ENCODE measurements at regions of chr6 and their contacts with region 1.

Region 1: DNA sequence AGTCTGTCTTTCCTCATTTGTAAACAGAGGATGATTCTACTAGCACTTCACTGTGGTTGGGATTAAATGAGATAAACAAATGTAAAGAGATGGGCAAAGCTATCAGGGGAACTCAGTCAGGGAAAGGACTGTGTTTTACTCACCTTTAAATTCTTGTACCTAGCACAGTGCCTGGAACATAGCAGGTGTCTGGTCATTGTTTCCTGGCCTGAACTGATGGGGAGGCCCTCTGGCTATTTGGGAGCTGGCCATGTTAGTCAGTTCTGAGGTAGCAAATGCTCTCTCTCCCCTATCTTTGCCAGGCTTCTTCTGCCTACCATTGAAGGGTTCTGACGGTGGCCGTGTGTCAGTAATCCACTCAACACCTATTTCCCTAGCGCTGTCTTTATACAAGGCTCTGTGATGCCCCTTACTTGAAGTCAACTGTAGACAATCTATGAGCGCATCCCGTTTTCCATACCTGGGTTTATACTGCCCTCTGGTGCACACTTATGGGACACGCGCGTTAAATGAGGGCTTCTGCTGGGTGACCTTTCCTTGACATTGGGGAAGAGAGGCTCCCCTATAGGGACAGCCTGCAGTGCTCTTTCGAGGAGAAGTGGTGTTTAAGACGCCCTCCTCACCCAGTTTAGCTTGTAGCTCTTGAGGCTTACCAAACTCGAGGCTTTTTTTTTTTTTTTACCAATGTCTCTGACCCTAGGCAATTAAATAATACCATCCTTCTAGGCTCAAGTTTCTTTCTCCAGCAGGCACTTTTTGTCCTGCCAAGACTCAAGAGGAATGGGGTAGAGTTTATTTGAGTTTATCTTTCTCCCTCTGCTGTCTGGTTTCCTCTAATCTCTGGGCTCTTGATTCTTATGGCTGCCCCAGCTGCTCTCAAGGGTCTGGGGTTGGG is 4.0 kb upstream of the SPATS1 start:
- DNase-seq: no peak
- ATAC-seq: peak; percentile 83
- H3K4me3 ChIP-seq: no peak overlapping the region
- H3K27ac ChIP-seq: no peak overlapping the region
- H3K4me1 ChIP-seq: no peaks in the 10 kb centered on the region
- H3K27me3 ChIP-seq: no peaks in the 10 kb centered on the region

Region 2: DNA sequence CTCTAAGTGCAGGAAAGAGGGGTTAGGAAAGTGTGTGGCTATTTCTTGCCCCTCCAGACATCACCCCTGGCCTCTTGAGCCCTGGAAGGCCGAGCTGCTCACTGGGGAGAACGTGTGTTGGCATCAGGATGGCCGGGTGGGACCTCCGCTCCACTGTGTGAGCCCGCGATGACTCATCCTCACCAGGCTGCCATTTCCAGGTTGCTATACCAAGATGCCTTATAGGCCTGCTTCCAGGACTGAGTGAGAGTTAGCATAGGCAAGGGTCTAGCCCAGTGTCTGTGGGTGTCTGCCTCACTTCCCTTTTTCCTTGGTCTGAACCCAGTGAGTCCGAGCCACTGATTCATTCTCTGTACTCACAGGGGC is 316.2 kb before region 1 on chr6:
- intact Hi-C with region 1: no loop called
- DNase-seq: peak in 1 of 2 donors; percentile 68
- ATAC-seq: peak; percentile 21
- H3K4me3 ChIP-seq: no peak overlapping the region
- H3K27ac ChIP-seq: no peak overlapping the region
- H3K4me1 ChIP-seq: no peaks in the 10 kb centered on the region
- H3K27me3 ChIP-seq: no peaks in the 10 kb centered on the region

Region 3: DNA sequence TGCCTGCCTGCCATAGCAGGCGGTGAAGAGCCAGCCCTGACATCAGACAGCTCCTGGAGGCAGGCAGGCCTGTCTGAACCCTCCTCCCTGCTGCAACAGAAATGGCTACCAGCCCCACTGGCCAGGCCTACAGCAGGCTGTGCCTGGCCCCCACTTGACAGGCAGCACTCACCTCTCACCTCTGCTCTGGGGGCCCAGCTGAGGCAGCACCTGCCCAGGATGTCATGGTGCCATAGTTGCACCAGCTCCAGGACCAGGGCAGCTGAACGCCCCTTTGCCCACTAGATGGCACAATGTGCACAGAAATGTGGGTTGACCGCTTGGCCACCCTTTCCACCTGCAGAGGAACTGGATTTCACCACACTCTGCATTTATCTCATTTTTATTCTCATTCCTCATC is 241.9 kb before region 1 on chr6:
- intact Hi-C with region 1: loop called (anchors 5 kb)
- DNase-seq: peak; percentile 78 to 88
- ATAC-seq: peak; percentile 88
- H3K4me3 ChIP-seq: no peak overlapping the region
- H3K27ac ChIP-seq: no peak overlapping the region
- H3K4me1 ChIP-seq: no peaks in the 10 kb centered on the region
- H3K27me3 ChIP-seq: no peaks in the 10 kb centered on the region

Region 4: DNA sequence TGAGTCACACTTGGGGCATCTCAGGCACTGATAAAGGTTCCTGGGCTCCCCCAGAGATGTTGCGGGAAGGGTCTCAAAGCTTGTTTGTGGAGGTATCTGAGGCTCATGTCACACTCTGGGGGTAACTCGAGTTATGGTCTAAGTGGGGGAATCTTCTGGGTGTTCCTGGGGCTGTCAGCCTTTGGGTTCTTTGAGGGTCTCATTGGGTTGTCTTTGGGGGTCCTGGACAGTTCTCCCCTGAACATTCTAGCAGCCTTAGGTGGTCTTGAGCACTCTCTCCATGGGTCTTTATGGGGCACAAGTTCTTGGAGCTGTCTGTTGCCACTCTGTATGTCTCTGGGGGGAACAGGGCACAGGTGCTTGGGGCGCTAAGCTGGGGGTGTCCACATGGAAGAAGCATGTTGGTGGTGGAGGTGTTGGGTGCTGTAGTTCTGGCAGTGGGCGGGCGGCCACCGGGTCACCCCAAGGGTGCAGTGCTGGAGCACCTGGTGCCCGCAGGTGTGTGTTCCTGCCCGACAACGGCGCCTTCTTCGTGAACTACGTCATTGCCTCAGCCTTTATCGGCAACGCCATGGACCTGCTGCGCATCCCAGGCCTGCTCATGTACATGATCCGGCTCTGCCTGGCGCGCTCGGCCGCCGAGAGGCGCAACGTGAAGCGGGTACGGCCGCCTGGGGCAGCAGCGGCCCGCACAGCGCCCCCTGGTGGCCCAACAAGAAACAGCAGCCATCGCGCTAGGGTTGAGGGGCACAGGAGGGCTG is 186.9 kb before region 1 on chr6:
- intact Hi-C with region 1: loop called in 1 of 2 experiments (anchors 10 kb)
- DNase-seq: peak; percentile 82 to 92
- ATAC-seq: peak; percentile 84
- H3K4me3 ChIP-seq: no peak overlapping the region
- H3K27ac ChIP-seq: no peak overlapping the region
- H3K4me1 ChIP-seq: no peaks in the 10 kb centered on the region
- H3K27me3 ChIP-seq: no peaks in the 10 kb centered on the region

Region 5: GRCh38 chr6:44172731-44173500 is 165.6 kb before region 1 on chr6:
- intact Hi-C with region 1: loop called in 1 of 2 experiments (anchors 10 kb)
- DNase-seq: peak; percentile 91 to 95
- ATAC-seq: peak; percentile 92
- H3K4me3 ChIP-seq: no peak overlapping the region
- H3K27ac ChIP-seq: no peak overlapping the region
- H3K4me1 ChIP-seq: no peaks in the 10 kb centered on the region
- H3K27me3 ChIP-seq: no peaks in the 10 kb centered on the region

Region 6: GRCh38 chr6:44265007-44265721 is 73.3 kb before region 1 on chr6 and contains the start of gene NFKBIE:
- intact Hi-C with region 1: loop called (anchors 1 to 2 kb)
- DNase-seq: peak; percentile 97 to 99
- ATAC-seq: peak; percentile 93
- H3K4me3 ChIP-seq: peak within 1 kb of the TSS; percentile 20 to 74
- H3K27ac ChIP-seq: peak within 1 kb of the TSS in 1 of 2 donors; percentile 1
- H3K4me1 ChIP-seq: peaks cover 0 to 4% of the 10 kb centered on the region in 2 donors
- H3K27me3 ChIP-seq: no peaks in the 10 kb centered on the region
- total RNA-seq, gene NFKBIE: 5.4 to 10.9 TPM